ENCODE measurements at regions of chr7 and their contacts with region 1.

Region 1: GRCh38 chr7:1569833-1570633 is at the start of gene PSMG3:
- DNase-seq: peak; percentile 84
- H3K4me3 Mint-ChIP-seq: peak within 1 kb of the TSS; percentile 89
- H3K27ac Mint-ChIP-seq: peak within 1 kb of the TSS; percentile 88
- H3K4me1 Mint-ChIP-seq: peaks cover 25% of the 10 kb centered on the region
- H3K27me3 Mint-ChIP-seq: no peaks in the 10 kb centered on the region
- total RNA-seq, gene PSMG3: 44.5 and 45.9 TPM in 2 replicates

Region 2: GRCh38 chr7:1532483-1533424 is 37.3 kb before region 1 on chr7:
- intact Hi-C with region 1: loop called (anchors 2 kb)
- DNase-seq: peak; percentile 54
- H3K4me3 Mint-ChIP-seq: peak overlapping the region; percentile 88
- H3K27ac Mint-ChIP-seq: peak overlapping the region; percentile 87
- H3K4me1 Mint-ChIP-seq: peaks cover 23% of the 10 kb centered on the region
- H3K27me3 Mint-ChIP-seq: no peaks in the 10 kb centered on the region

Region 3: DNA sequence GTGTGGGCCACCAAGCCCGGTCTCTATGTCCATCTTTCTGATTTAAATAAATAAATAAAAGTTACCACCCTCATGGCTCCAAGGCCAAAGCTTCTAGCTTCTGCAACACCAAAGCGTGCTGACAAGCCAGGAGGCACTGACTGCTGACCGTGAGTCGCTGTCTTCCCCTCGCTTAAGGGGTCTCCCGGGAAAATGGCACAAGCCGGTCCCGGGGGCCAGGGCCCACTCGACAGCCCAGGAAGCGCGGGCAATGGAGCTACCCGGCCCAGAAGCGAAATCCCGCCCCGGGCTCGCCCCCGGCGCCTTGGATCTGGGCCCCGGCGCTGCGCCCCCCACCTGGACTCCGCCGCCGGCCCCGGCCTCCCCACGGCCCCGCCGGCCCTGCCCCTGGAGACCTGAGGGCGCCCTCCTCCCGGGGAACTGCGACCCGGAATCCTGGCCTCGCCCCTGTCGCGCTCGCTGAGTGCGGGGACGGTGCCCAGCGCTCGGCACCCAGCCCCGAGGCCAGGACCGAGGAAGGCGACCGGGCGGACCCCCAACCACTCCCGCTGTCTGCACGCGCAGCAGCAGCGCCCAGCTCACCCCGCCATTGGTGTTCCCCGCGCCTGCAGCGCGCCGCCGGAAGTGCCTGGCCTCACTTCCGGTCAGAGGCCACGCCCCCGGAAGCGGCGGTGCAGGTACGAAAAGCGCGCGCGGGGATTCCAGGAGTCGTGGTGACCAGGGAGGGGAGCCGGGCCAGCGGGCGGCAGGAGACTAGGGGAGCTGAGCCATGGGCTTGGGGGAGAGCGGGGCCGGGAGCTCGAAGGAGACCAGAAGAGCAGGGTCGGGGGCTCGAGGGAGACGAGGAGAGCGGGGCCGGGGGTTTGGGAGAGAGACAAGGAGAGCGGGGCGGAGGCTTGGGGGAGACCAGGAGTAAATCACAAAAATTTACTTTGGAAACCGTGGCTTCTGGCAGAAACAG is 671.8 kb after region 1 on chr7 and contains the starts of genes MRM2 and NUDT1:
- intact Hi-C with region 1: loop called (anchors 10 kb)
- DNase-seq: peak; percentile 71
- H3K4me3 Mint-ChIP-seq: peak within 1 kb of the TSS; percentile 97
- H3K27ac Mint-ChIP-seq: peak within 1 kb of the TSS; percentile 95
- H3K4me1 Mint-ChIP-seq: peaks cover 22% of the 10 kb centered on the region
- H3K27me3 Mint-ChIP-seq: no peaks in the 10 kb centered on the region
- total RNA-seq, gene MRM2: 40.0 and 40.5 TPM in 2 replicates
- total RNA-seq, gene NUDT1: 68.3 and 69.3 TPM in 2 replicates